ENCODE measurements at regions of chr3 and their contacts with region 1.

Region 1: DNA sequence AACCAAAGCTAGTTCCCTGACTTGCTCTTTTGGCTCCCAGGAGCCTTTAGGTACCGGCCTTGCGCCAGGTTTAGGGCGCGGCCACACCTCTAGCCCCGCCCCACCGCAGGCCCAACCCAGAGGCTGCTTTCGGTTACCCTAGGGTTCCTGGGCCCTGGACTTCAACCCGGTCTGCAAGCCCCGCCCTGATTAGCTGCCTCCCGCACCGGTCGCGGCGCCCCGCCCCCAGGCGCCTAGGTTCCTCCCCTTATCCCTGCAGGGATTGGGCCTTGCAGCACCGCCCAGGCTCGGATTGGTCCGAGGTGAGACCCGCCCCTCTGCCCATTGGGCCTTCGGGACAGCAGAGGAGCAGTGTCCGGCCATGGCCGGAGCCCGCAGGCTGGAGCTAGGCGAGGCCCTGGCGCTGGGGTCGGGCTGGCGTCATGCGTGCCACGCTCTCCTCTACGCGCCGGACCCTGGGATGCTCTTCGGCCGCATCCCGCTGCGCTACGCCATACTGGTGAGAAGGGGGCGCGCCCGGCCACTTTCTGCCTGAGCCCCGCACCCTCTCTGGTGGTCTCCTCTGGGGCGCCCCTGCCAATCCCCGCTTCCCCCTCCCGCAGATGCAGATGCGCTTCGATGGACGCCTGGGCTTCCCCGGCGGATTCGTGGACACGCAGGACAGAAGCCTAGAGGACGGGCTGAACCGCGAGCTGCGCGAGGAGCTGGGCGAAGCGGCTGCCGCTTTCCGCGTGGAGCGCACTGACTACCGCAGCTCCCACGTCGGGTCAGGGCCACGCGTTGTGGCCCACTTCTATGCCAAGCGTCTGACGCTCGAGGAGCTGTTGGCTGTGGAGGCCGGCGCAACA is at the start of gene NUDT16:
- DNase-seq: peak; percentile 95 to 99 (median 98)
- H3K4me3 ChIP-seq: peak within 1 kb of the TSS; percentile 69 to 99 (median 92)
- H3K27ac ChIP-seq: peak within 1 kb of the TSS; percentile 66 to 97 (median 89)
- H3K27me3 ChIP-seq: no peaks in the 10 kb centered on the region
- CTCF ChIP-seq: peak in 18 of 56 donors; percentile 5 to 56 (median 20)
- total RNA-seq, gene NUDT16: 29.4 to 54.0 (median 36.4) TPM

Region 2: DNA sequence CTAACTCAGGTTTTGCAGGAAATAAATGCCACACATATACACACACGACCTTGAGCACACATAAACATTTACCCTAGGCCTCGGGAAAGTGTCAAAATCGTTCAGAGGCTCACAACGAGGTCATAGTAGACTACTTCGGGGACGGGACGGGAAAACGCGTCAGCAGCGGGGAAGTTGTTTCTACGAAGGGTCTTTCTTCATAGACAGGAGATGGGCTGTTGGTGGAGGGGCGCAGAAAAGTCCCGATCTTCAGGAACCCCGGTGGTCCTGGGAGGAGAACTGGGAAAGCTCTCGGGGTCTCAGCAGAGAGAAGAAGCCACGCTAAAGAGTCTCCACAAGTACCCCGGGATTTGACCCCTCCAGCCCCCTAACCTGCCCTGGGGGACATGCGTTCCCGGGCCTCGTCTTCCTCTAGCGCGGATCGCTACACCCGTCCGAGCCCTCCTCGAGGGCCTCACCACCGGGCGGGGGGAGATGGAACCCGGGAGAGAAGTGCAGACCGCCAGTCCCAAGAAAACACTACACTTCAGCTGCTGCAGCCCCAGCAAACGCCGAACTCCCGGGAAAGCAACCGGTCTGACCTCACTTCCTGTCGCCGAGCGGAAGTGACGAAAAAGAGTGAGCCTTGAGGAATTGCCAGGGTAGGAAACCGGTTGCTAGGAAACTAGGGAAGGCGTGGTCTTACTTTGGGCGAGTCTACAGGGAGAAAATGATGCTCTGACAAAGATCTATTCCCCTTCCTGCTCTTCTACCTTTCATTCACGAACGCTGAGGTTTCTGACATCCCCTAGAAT is 635.2 kb before region 1 on chr3 and contains the start of gene PIK3R4:
- intact Hi-C with region 1: loop called in 1 of 2 experiments (anchors 10 kb)
- DNase-seq: peak; percentile 94 to 98 (median 96)
- H3K4me3 ChIP-seq: peak within 1 kb of the TSS; percentile 65 to 100 (median 93)
- H3K27ac ChIP-seq: peak within 1 kb of the TSS in 56 of 59 donors; percentile 5 to 94 (median 80)
- H3K27me3 ChIP-seq: no peaks in the 10 kb centered on the region
- CTCF ChIP-seq: peak in 9 of 56 donors; percentile 10 to 29 (median 20)
- total RNA-seq, gene PIK3R4: 25.7 to 54.3 (median 38.9) TPM

Region 3: GRCh38 chr3:130892759-130893375 is 488.8 kb before region 1 on chr3:
- intact Hi-C with region 1: loop called in 1 of 2 experiments (anchors 5 kb)
- DNase-seq: peak in 8 of 10 donors; percentile 48 to 85 (median 63)
- H3K4me3 ChIP-seq: peak overlapping the region; percentile 67 to 98 (median 89)
- H3K27ac ChIP-seq: peak overlapping the region; percentile 87 to 99 (median 97)
- H3K27me3 ChIP-seq: no peaks in the 10 kb centered on the region
- CTCF ChIP-seq: peak; percentile 70 to 95 (median 87)

Region 4: DNA sequence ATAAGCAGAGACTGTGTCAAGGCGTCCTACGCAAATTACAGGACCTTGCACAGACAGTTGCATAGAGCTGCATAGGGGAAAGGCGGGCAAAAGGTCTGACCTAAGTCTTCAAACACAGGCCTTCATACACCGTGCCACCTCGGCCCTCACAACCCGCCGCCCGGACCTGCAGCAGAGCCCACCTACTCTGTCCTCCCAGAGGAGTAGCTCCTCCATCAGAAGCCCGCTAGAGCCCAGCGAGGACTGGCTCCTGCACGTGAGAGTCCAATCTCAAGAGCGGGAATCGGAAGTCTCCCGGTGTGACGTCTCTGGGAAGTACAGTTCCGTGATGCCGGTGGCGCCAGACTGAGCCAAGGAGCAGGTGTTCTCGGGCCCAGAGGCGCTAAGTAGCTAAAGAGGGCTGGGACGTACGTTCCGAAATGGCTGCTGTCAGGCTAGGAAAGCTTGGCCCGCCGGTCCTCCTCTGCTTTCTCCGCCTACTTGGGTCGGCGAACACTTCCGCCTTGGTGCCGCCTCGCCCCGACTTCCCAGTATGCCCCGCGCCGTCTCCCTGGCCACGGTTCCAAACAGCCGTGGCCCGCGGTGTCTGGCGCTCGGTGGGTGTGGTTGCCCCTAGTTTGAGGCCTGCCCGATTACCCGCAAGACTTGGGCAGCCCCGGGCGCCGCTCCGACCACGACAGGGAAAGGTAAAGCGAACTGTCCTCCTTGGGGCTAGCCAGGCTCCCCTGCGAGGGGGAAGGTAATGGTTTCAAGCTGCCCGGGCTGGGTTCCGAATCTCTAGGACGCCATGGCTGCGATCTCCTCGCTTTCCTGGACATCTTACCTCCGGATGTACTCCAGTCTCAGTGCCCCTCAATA is 355.1 kb before region 1 on chr3 and contains the starts of genes ASTE1 and NEK11:
- intact Hi-C with region 1: loop called (anchors 5 to 10 kb)
- DNase-seq: peak; percentile 82 to 93 (median 90)
- H3K4me3 ChIP-seq: peak within 1 kb of the TSS; percentile 65 to 97 (median 85)
- H3K27ac ChIP-seq: peak within 1 kb of the TSS; percentile 48 to 96 (median 85)
- H3K27me3 ChIP-seq: no peaks in the 10 kb centered on the region
- CTCF ChIP-seq: peak in 27 of 56 donors; percentile 6 to 51 (median 28)
- total RNA-seq, gene ASTE1: 3.8 to 19.0 (median 8.2) TPM
- total RNA-seq, gene NEK11: 16.6 to 35.3 (median 22.2) TPM

Region 5: GRCh38 chr3:131082871-131083863 is 298.5 kb before region 1 on chr3:
- intact Hi-C with region 1: loop called in 1 of 2 experiments (anchors 10 kb)
- DNase-seq: peak; percentile 88 to 99 (median 97)
- H3K4me3 ChIP-seq: peak overlapping the region in 52 of 59 donors; percentile 1 to 56 (median 30)
- H3K27ac ChIP-seq: peak overlapping the region in 57 of 59 donors; percentile 7 to 90 (median 78)
- H3K27me3 ChIP-seq: no peaks in the 10 kb centered on the region
- CTCF ChIP-seq: peak in 1 of 56 donors; percentile 9

Region 6: DNA sequence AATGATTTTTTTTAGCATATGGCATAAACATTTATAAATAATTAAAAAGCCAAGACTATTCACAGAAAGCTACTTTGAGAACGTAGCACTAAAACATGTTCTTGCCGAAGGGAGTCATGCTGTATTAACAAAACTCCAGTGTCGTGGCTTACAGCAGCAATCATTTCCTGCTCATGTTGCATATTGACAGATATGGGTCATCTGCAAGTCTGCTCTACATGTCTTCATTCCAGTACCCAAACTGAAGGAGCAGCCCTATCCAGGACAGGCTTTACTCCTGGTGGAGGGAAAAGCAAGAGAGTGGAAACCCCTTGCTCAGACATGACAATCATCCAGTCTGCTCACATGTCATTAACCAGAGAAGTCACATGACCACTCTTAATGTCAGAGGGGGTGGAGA is 267.4 kb before region 1 on chr3:
- intact Hi-C with region 1: no loop called
- DNase-seq: no peak
- H3K4me3 ChIP-seq: no peak overlapping the region
- H3K27ac ChIP-seq: no peak overlapping the region
- H3K27me3 ChIP-seq: no peaks in the 10 kb centered on the region
- CTCF ChIP-seq: no peak

Region 7: GRCh38 chr3:131502530-131503245 is 121.0 kb after region 1 on chr3 and contains the start of gene MRPL3:
- intact Hi-C with region 1: loop called in 1 of 2 experiments (anchors 5 kb)
- DNase-seq: peak; percentile 74 to 91 (median 86)
- H3K4me3 ChIP-seq: peak within 1 kb of the TSS; percentile 47 to 100 (median 91)
- H3K27ac ChIP-seq: peak within 1 kb of the TSS in 51 of 59 donors; percentile 0 to 85 (median 64)
- H3K27me3 ChIP-seq: peaks cover 0 to 8% (median 0%) of the 10 kb centered on the region in 45 donors
- CTCF ChIP-seq: peak in 35 of 56 donors; percentile 3 to 60 (median 29)
- total RNA-seq, gene MRPL3: 24.9 to 63.5 (median 46.5) TPM

Measured in dorsolateral prefrontal cortex (tissue), 120 donors.